ENCODE measurements at regions of chr6 and their contacts with region 1.

Region 1: DNA sequence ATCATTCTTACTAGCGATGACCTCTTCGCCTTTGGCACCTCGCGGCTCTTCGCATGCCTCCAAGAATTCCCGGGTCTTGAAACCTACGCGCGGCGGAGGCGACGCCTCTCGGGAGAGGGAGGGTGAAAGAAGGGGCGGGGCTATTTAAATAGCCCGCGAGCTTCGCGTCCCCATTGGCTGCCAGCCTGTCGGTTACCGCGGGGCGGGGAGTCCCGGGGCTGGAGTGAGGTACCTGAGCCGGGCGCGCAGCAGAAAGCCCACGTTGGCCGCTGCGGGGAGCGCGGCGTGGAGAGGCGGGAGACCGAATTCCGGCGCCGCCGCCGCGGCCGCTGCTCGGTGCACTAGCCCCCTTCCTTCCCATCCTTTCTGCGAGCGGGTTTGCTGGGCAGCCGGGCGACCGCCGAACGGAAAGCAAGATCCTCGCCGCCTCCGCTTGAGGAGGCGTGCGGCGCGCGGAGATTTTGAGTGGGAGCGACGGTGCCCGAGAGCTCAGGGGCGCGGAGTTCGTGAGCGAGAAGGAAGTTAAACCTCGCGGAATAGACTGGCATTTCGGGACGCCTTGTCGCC is at the start of gene BMP6:
- DNase-seq: peak; percentile 89 to 90
- H3K4me3 ChIP-seq: peak within 1 kb of the TSS; percentile 26 to 52 (median 29)
- H3K27ac ChIP-seq: no peak within 1 kb of the TSS
- H3K4me1 ChIP-seq: peaks cover 12 to 30% of the 10 kb centered on the region in 2 donors
- H3K27me3 ChIP-seq: peaks cover 32% of the 10 kb centered on the region
- CTCF ChIP-seq: no peak
- POLR2A ChIP-seq: peak in 1 of 2 donors; percentile 65
- total RNA-seq, gene BMP6: 0.78 to 3.1 (median 1.9) TPM

Region 2: GRCh38 chr6:7846966-7847818 is 121.3 kb after region 1 on chr6:
- intact Hi-C with region 1: no loop called
- DNase-seq: no peak
- H3K4me3 ChIP-seq: no peak overlapping the region
- H3K27ac ChIP-seq: no peak overlapping the region
- H3K4me1 ChIP-seq: no peaks in the 10 kb centered on the region
- H3K27me3 ChIP-seq: no peaks in the 10 kb centered on the region
- CTCF ChIP-seq: no peak
- POLR2A ChIP-seq: no peak

Region 3: DNA sequence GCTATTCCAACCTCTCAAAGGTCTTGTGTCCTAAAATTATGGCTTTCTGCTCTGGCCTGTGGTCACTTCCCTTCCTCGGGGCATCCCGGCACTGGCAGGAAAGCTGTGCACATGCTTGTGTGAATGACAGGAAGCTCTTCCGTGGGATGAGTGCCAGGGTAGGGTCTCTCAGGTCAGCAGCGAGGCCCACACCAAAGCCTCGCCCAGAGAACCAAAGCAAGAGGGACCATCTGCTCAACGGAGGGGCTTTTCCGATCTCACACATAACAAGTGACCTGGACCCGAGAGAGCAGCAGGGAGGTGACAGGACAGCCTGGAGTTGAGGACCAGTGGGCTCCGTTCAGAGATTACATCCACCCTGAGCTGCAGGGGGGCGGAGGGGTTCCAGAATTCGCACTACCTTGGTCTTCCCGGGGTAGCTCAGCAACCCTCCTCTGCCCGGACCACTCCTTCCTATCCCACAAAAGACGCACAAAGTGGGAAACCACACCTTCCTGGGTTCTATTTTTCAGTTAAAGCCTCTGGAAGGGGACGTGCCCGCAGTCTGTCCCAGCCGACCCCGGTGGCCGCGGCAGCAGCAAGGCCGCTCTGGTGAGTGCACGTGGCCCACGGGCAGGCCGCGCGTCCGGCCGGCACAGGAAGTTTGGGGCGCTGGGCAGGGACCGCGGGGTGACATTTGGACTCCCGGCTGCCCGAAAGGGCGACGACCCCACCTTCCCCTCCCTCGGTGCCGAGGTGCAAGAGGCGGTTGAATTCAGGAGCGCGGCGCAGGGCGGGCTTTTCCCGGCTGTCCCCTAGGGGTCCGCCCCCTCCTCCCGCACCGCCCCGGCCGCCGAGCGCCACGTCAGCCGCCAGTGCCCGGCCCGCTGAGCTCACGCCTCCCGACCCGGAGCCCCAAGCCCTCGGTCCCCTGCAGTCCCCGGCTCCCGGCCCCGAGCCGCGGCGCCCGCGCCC is 183.7 kb after region 1 on chr6:
- intact Hi-C with region 1: loop called (anchors 5 kb)
- DNase-seq: peak; percentile 45 to 57
- H3K4me3 ChIP-seq: peak overlapping the region; percentile 59 to 69 (median 66)
- H3K27ac ChIP-seq: peak overlapping the region in 2 of 3 donors; percentile 34 to 51
- H3K4me1 ChIP-seq: peaks cover 11 to 14% of the 10 kb centered on the region in 2 donors
- H3K27me3 ChIP-seq: no peaks in the 10 kb centered on the region
- CTCF ChIP-seq: no peak
- POLR2A ChIP-seq: no peak

Region 4: DNA sequence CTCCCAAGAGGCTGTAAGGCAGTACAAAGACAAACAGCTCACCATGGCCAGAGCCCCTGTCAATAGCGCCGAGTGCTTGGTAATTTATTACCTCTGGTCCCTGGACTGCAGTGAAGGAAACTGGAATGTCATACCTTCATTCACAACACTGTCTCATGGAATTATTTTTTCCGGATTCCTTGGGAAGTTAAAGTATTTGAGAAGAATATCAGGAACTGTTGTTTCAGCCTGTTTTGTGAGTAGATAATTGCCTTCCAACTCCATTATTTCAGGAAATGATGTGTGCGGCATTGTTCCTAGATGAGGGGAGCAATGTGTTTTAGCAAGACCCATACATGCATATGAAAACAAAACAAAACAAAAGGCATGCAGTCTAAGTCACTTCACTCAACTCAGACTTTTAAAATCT is 274.3 kb after region 1 on chr6:
- intact Hi-C with region 1: loop called (anchors 5 kb)
- DNase-seq: no peak
- H3K4me3 ChIP-seq: no peak overlapping the region
- H3K27ac ChIP-seq: no peak overlapping the region
- H3K4me1 ChIP-seq: no peaks in the 10 kb centered on the region
- H3K27me3 ChIP-seq: no peaks in the 10 kb centered on the region
- CTCF ChIP-seq: no peak
- POLR2A ChIP-seq: no peak

Region 5: DNA sequence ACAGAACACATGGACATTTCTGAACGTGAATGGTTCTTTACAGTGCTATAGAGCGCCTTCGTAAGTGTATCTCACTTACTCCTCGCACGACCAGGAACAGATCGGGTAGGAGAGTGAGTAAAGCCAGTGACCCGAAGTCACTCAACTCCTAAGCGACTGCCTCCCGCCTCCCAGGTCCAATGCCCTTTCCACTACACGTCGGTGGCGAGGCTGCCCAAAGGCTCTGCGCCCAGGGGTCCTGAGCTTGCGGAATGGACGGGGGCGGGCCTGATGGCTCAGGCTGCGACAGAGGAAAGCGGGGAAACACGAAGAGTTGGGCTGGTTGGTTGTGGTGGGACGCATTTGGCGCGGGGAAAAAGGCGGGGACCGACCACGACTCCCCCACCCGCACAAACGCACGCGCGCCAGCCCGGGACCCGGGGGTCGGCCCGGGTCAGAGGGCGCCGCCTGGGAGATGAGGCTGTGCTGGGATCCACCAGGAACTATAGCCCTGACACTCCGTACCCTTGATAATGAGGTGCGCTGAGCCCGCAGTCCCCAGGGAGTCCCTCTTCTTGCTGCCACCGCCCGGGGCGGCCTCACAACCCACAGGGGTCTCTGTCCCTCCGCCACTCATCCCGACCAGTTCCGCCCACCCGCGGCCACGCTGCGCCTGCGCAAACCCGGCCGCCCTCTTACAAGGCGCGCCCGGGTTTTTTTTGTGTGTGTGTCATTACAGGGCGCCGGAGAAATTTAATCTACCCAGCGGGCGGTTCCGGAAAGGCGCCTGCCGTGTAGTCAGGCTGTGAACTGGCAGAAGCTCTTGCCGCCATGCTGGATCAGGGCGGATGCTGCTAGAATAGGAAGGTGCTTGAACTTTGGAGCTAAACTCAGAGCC is 338.1 kb after region 1 on chr6 and contains the start of gene BLOC1S5:
- intact Hi-C with region 1: loop called (anchors 5 kb)
- DNase-seq: peak; percentile 97 to 98
- H3K4me3 ChIP-seq: peak within 1 kb of the TSS; percentile 69 to 79 (median 69)
- H3K27ac ChIP-seq: peak within 1 kb of the TSS; percentile 71 to 86 (median 81)
- H3K4me1 ChIP-seq: peaks cover 7 to 9% of the 10 kb centered on the region in 2 donors
- H3K27me3 ChIP-seq: no peaks in the 10 kb centered on the region
- CTCF ChIP-seq: peak in 1 of 6 experiments; percentile 31
- POLR2A ChIP-seq: peak in 1 of 2 donors; percentile 70
- total RNA-seq, gene BLOC1S5: 15.2 to 27.7 (median 19.9) TPM